ENCODE measurements at regions of chr19 and their contacts with region 1.

Region 1: DNA sequence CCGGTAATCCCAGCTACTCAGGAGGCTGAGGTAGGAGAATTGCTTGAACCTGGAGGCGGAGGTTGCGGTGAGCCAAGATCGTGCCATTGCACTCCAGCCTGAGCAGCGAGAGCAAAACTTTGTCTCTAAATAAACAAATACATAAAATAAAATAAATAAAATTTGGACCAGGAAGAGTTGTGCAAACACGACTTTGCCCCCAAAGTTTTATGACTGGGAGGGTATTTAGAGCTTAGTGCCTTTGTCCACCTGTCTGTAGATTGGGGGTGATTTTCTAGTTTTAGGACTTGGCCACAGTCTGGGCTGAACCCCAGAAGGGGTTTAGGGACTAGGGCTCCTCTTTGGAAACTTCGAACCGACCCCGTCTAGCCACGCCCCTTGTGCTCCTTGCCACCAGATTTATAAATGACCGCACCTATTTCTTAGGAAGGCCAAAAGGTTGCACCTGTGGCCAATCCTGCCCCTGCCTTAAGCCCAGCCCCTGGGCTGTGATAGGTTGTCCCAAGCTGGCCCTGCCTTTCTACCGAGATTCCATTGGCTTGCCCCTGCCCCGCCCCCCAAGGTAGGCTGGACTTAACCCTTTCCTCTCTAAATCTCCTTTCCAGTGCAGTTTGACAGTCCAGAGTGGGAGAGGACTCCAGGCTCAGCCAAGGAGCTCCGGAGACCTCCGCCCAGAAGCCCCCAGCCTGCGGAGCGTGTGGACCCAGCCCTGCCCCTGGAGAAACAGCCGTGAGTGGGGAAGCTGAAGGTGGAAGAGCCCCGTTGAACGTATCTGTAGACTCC is 5.3 kb downstream of the SHD start:
- DNase-seq: no peak

Region 2: GRCh38 chr19:4334929-4335570 is 50.7 kb after region 1 on chr19:
- intact Hi-C with region 1: loop called in 1 of 2 experiments (anchors 1 kb)
- DNase-seq: no peak